ENCODE measurements at regions of chr7 and their contacts with region 1.

Region 1: GRCh38 chr7:36366718-36367560 is 22.7 kb upstream of the ANLN start:
- DNase-seq: peak; percentile 90
- H3K4me3 ChIP-seq: peak overlapping the region; percentile 47 to 76 (median 68)
- H3K27ac ChIP-seq: no peak overlapping the region
- H3K4me1 ChIP-seq: no peaks in the 10 kb centered on the region
- H3K27me3 ChIP-seq: peaks cover 13 to 23% of the 10 kb centered on the region in 2 experiments
- CTCF ChIP-seq: peak; percentile 92 to 94
- POLR2A ChIP-seq: no peak

Region 2: DNA sequence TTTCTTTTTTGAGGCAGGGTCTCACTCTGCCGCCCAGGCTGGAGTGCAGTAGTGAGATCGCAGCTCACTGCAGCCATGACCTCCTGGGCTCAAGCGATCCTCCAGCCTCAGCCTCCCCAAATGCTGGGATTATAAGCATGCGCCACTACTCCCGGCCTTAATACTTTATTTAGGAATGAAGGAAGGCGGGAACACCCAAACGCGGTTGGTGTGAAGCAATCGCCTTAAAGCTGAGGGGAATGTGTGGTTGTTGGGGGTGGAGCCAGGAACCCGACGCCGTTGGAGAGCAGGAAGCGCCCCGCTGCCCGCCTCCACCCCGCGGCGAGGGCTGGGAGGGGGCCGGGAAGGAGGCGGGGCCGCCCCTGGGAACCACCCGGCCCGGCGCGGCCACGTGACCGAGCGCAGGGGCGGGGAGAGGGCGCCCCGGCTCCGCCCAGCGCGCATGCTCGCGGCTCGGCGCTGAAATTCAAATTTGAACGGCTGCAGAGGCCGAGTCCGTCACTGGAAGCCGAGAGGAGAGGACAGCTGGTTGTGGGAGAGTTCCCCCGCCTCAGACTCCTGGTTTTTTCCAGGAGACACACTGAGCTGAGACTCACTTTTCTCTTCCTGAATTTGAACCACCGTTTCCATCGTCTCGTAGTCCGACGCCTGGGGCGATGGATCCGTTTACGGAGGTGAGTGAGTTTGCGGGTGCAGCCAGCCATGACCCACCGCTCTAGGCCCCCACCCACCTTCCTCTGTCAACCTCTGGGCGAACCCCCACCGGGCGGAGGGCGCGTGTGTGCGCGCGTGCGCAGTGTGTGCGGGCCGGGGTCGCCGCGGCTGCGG is 22.6 kb after region 1 on chr7 and contains the start of gene ANLN:
- CTCF ChIA-PET with region 1: interaction called, 26 read pairs
- POLR2A ChIA-PET with region 1: interaction called, 3 read pairs
- dilution Hi-C with region 1: no loop called
- intact Hi-C with region 1: loop called (anchors 1 kb)
- DNase-seq: peak; percentile 86
- H3K4me3 ChIP-seq: peak within 1 kb of the TSS; percentile 57 to 91 (median 87)
- H3K27ac ChIP-seq: peak within 1 kb of the TSS; percentile 63
- H3K4me1 ChIP-seq: peaks cover 31% of the 10 kb centered on the region
- H3K27me3 ChIP-seq: peaks cover 0 to 2% of the 10 kb centered on the region in 2 experiments
- CTCF ChIP-seq: no peak
- POLR2A ChIP-seq: peak; percentile 49
- total RNA-seq, gene ANLN: 112 and 119 TPM in 2 replicates

Region 3: GRCh38 chr7:36440880-36441279 is 73.9 kb after region 1 on chr7:
- CTCF ChIA-PET with region 1: interaction called, 11 read pairs
- POLR2A ChIA-PET with region 1: no interaction called
- dilution Hi-C with region 1: no loop called
- intact Hi-C with region 1: no loop called
- DNase-seq: peak; percentile 48
- H3K4me3 ChIP-seq: no peak overlapping the region
- H3K27ac ChIP-seq: no peak overlapping the region
- H3K4me1 ChIP-seq: no peaks in the 10 kb centered on the region
- H3K27me3 ChIP-seq: no peaks in the 10 kb centered on the region
- CTCF ChIP-seq: peak in 1 of 2 donors; percentile 12
- POLR2A ChIP-seq: no peak

Measured in endothelial cell of umbilical vein (primary cell).